Activated T-helper 2 cell treated with anti-CD3 and anti-CD28 coated beads, Interferon-gamma antibody, Interleukin-2, Interleukin-4, amounts not matched to agents 10 μg/mL and 5 μg/mL and 100 μg/mL, durations not matched to agents 14 hours and 24 hours and 36 hours (primary cell): ENCODE measurements at regions of chr7 and their contacts with region 1.

Region 1: DNA sequence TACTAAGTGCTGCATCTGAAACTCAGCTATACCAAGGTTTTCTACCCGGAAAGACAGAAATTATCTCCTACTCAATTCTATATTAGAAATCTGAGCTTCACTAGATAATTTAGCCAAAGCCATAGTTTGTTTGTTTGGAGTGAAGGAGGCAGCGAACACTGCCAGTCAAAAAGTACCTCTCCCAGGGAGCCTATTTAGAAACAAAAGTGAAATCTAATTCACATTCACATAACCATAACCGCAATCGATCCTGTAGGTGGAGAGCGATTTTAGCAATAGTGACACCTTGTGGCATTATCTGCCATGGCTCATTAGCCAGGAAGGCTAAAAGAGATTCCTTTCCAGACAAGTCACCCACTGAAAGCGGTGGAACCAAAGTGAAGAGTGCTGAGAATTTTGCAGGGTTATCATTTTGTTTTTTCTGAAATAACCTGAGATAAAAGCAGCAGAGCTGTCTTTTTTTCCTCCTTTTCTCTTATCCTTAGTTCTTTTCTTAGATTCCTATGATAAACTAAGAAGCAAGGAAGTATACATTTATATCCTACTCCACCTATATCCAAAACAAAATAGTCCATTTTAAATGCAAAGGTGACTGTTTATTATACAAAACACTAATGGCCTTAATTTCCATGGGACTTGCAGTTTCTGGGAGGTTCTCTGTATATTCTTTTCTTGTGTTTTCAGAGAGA is 83.7 kb upstream of the BET1 start:
- DNase-seq: peak; percentile 34
- H3K4me3 Mint-ChIP-seq: peak overlapping the region; percentile 37
- H3K27ac Mint-ChIP-seq: no peak overlapping the region
- H3K4me1 Mint-ChIP-seq: peaks cover 6% of the 10 kb centered on the region
- H3K27me3 Mint-ChIP-seq: peaks cover 41% of the 10 kb centered on the region

Region 2: DNA sequence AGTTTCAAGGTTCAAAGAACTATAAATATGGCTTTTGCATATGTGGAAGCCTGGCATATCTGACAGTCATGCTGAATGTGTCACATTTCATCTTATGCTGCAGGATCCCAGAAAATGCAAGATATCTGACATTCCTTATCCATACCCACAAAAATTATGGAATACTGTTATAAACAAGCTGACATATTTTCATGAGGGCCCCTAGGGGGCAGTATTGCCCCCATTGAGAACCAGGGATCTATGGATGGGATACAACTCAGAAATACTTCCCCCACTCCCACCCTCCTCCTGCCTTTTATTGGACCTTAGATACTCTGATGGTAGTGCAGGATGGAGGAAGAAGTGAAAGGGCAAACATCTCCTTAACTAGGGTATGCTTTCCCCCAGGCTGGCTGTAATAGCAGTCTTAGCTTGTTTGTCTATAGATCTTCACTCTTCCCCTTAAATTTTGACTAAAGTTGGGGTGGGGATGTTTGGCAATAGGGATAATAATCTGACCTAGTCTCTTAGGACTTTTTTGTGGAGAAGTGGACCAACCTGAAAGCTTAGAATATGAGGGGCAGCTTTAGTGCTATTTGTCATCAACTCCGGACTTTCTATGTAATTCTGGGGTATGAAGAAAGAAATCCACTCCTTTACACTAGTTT is 184.9 kb before region 1 on chr7:
- intact Hi-C with region 1: loop called (anchors 2 kb)
- DNase-seq: no peak
- H3K4me3 Mint-ChIP-seq: no peak overlapping the region
- H3K27ac Mint-ChIP-seq: no peak overlapping the region
- H3K4me1 Mint-ChIP-seq: no peaks in the 10 kb centered on the region
- H3K27me3 Mint-ChIP-seq: peaks cover 17% of the 10 kb centered on the region